Endothelial cell of umbilical vein (primary cell): ENCODE measurements at regions of chr22 and their contacts with region 1.

Region 1: DNA sequence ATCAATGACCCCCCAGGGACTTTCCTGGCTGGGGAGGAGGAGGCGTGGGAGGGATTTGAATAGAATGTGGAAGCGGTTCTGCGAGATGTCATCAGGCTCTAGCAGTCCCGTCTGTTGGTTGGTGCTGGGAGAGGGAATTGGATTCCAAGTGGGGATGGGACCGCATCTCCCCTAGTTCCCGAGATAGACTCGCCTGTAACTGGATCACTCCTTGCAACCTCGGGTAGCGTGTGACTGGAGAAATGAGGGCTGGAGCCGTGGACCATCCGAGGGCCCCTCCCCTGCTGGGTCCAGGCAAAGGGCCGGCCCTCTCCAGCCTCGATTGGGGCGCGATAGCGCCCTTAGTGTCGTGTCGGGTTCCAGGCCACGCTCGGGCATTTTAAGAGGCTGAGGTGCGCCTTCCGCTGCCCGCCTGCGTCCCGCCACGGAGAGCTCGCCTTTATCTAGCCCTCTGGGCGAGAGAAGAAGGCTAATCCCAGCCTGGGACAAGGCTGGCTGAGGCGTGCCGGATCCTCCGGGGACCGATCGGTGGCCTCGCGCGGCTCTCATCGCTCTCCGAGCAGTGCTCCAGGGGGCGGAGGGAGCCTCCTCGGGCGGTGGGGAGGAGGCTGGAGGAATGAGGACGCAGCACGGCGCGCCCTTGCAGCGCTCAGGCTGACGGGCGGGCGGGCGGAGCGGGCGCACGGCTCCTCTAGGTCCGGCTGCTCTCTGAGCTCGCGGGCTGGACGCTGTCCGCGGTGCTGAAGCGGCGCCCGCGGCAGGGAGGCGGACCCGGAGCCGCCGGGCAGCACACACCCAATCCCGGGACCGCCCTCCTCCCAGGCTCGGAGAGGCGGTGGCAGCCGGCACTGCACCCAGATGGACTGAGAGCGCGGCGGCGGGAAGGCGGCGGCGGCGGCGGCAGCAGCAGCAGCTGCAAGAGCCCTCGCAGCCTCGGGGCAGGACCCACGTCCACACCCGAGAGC is 107.8 kb downstream of the OSBP2 start:
- DNase-seq: peak; percentile 93
- H3K4me3 ChIP-seq: no peak overlapping the region
- H3K27ac ChIP-seq: no peak overlapping the region
- H3K4me1 ChIP-seq: peaks cover 12% of the 10 kb centered on the region
- H3K27me3 ChIP-seq: peaks cover 5 to 8% of the 10 kb centered on the region in 2 experiments
- CTCF ChIP-seq: peak in 1 of 2 donors; percentile 41
- POLR2A ChIP-seq: no peak

Region 2: GRCh38 chr22:30763815-30764686 is 38.4 kb before region 1 on chr22:
- CTCF ChIA-PET with region 1: interaction called, 16 read pairs
- POLR2A ChIA-PET with region 1: no interaction called
- dilution Hi-C with region 1: no loop called
- intact Hi-C with region 1: no loop called
- DNase-seq: peak; percentile 77
- H3K4me3 ChIP-seq: no peak overlapping the region
- H3K27ac ChIP-seq: no peak overlapping the region
- H3K4me1 ChIP-seq: no peaks in the 10 kb centered on the region
- H3K27me3 ChIP-seq: no peaks in the 10 kb centered on the region
- CTCF ChIP-seq: peak; percentile 67 to 71
- POLR2A ChIP-seq: no peak

Region 3: DNA sequence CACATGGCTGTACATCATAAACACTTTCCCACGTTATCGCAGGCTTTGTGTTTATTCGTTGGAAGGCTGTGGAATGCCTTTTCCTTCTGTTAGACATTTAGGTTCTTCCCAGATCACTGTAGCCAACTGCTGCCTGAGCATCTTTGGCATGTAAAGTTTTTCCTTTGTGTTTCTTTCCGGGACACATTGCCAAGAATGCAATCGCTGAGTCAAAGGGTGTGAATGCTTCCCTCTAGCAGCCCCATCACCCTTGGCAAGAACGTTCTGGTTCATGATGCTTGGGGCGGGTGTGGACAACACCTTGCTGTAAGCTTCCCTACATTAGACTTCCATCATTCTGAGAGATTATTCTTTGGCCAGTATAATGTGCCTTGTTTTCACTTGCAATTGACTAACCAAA is 28.4 kb after region 1 on chr22:
- CTCF ChIA-PET with region 1: interaction called, 4 read pairs
- POLR2A ChIA-PET with region 1: no interaction called
- dilution Hi-C with region 1: no loop called
- intact Hi-C with region 1: loop called (anchors 1 kb)
- DNase-seq: peak; percentile 92
- H3K4me3 ChIP-seq: no peak overlapping the region
- H3K27ac ChIP-seq: peak overlapping the region; percentile 69
- H3K4me1 ChIP-seq: peaks cover 18% of the 10 kb centered on the region
- H3K27me3 ChIP-seq: no peaks in the 10 kb centered on the region
- CTCF ChIP-seq: no peak
- POLR2A ChIP-seq: no peak

Region 4: DNA sequence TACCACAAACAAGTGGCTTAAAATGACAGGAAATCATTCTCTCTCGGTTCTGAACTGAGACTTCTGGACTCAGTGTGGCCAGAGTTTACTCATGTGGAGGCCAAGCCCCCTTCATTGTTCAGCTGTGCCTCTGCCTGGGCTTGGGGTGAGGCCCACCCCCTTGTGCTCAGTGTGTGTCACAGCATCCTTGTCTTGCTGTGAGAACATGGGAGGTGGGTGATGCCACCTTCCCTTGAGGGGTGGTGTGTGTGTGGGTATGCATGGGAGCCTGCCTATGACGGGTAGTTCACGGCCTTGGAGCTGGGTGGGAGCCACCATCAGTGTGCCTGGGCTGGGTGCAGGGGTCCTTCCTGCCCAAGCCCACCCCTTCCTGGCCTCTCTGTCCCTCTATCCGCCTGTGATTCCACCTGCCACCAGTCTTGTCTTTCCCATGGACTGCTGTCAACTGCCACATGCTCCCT is 64.4 kb after region 1 on chr22:
- CTCF ChIA-PET with region 1: interaction called, 5 read pairs
- POLR2A ChIA-PET with region 1: no interaction called
- dilution Hi-C with region 1: no loop called
- intact Hi-C with region 1: loop called (anchors 2 kb)
- DNase-seq: peak; percentile 80
- H3K4me3 ChIP-seq: no peak overlapping the region
- H3K27ac ChIP-seq: peak overlapping the region; percentile 19
- H3K4me1 ChIP-seq: peaks cover 14% of the 10 kb centered on the region
- H3K27me3 ChIP-seq: no peaks in the 10 kb centered on the region
- CTCF ChIP-seq: peak; percentile 37 to 44
- POLR2A ChIP-seq: no peak